ENCODE measurements at regions of chr11 and their contacts with region 1.

Region 1: GRCh38 chr11:25981998-25982397 is 349.9 kb upstream of the ANO3 start:
- DNase-seq: peak in 1 of 2 experiments; percentile 59
- H3K4me3 ChIP-seq: no peak overlapping the region
- H3K4me3 Mint-ChIP-seq: no peak overlapping the region
- H3K27ac Mint-ChIP-seq: no peak overlapping the region
- H3K4me1 ChIP-seq: no peaks in the 10 kb centered on the region
- H3K4me1 Mint-ChIP-seq: no peaks in the 10 kb centered on the region
- H3K27me3 ChIP-seq: no peaks in the 10 kb centered on the region
- H3K27me3 Mint-ChIP-seq: peaks cover 8% of the 10 kb centered on the region
- CTCF ChIP-seq: peak; percentile 47 to 56

Region 2: GRCh38 chr11:26134481-26135355 is 152.7 kb after region 1 on chr11:
- CTCF ChIA-PET with region 1: interaction called, 25 read pairs
- POLR2A ChIA-PET with region 1: no interaction called
- intact Hi-C with region 1: loop called (anchors 1 kb)
- DNase-seq: peak in 1 of 2 experiments; percentile 31
- H3K4me3 ChIP-seq: no peak overlapping the region
- H3K4me3 Mint-ChIP-seq: no peak overlapping the region
- H3K27ac Mint-ChIP-seq: no peak overlapping the region
- H3K4me1 ChIP-seq: no peaks in the 10 kb centered on the region
- H3K4me1 Mint-ChIP-seq: no peaks in the 10 kb centered on the region
- H3K27me3 ChIP-seq: no peaks in the 10 kb centered on the region
- H3K27me3 Mint-ChIP-seq: peaks cover 2% of the 10 kb centered on the region
- CTCF ChIP-seq: peak; percentile 24 to 49